Ovary (tissue), 10 donors: ENCODE measurements at regions of chr3 and their contacts with region 1.

Region 1: GRCh38 chr3:34777386-34777785 is 861.9 kb upstream of the ARPP21 start:
- DNase-seq: no peak
- H3K4me3 ChIP-seq: no peak overlapping the region
- H3K27ac ChIP-seq: no peak overlapping the region
- H3K4me1 ChIP-seq: no peaks in the 10 kb centered on the region
- H3K27me3 ChIP-seq: no peaks in the 10 kb centered on the region
- CTCF ChIP-seq: no peak
- EP300 ChIP-seq: no peak
- POLR2A ChIP-seq: no peak

Region 2: GRCh38 chr3:34687671-34688070 is 89.7 kb before region 1 on chr3:
- intact Hi-C with region 1: no loop called
- DNase-seq: no peak
- H3K4me3 ChIP-seq: no peak overlapping the region
- H3K27ac ChIP-seq: no peak overlapping the region
- H3K4me1 ChIP-seq: no peaks in the 10 kb centered on the region
- H3K27me3 ChIP-seq: no peaks in the 10 kb centered on the region
- CTCF ChIP-seq: no peak
- EP300 ChIP-seq: no peak
- POLR2A ChIP-seq: no peak

Region 3: GRCh38 chr3:35028157-35028556 is 250.8 kb after region 1 on chr3:
- intact Hi-C with region 1: loop called in 1 of 4 experiments (anchors 5 kb)
- DNase-seq: no peak
- H3K4me3 ChIP-seq: no peak overlapping the region
- H3K27ac ChIP-seq: no peak overlapping the region
- H3K4me1 ChIP-seq: no peaks in the 10 kb centered on the region
- H3K27me3 ChIP-seq: no peaks in the 10 kb centered on the region
- CTCF ChIP-seq: no peak
- EP300 ChIP-seq: no peak
- POLR2A ChIP-seq: no peak